Esophagus muscularis mucosa (tissue), 4 donors: ENCODE measurements at regions of chr12 and their contacts with region 1.

Region 1: GRCh38 chr12:91991399-91992187 is 154.1 kb downstream of the BTG1 start:
- DNase-seq: no peak
- H3K4me3 ChIP-seq: no peak overlapping the region
- H3K27ac ChIP-seq: no peak overlapping the region
- H3K4me1 ChIP-seq: peaks cover 0 to 11% (median 0%) of the 10 kb centered on the region in 4 donors
- H3K27me3 ChIP-seq: no peaks in the 10 kb centered on the region
- CTCF ChIP-seq: no peak
- EP300 ChIP-seq: no peak
- POLR2A ChIP-seq: no peak

Region 2: GRCh38 chr12:91617830-91618702 is 373.5 kb before region 1 on chr12:
- intact Hi-C with region 1: no loop called
- DNase-seq: no peak
- H3K4me3 ChIP-seq: no peak overlapping the region
- H3K27ac ChIP-seq: no peak overlapping the region
- H3K4me1 ChIP-seq: no peaks in the 10 kb centered on the region
- H3K27me3 ChIP-seq: no peaks in the 10 kb centered on the region
- CTCF ChIP-seq: no peak
- EP300 ChIP-seq: no peak
- POLR2A ChIP-seq: no peak

Region 3: DNA sequence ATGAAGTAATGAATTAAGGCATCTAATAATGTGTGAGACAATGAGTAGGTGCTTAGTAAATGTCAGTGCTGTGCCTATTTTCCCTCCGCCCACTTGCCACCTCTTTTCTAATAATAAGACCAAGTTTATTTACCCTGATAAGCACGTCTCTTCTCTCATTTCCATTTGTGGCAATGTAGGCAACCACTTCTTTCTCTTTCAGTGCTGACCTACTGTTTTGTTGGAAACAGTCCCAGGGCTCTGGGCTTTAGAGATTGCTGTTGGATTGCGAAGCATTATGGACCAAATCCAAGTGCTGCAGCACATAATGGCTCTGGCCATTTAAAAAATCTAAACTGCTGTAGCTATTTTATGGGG is 569.9 kb after region 1 on chr12:
- intact Hi-C with region 1: loop called (anchors 10 kb)
- DNase-seq: no peak
- H3K4me3 ChIP-seq: no peak overlapping the region
- H3K27ac ChIP-seq: peak overlapping the region; percentile 16 to 73 (median 58)
- H3K4me1 ChIP-seq: peaks cover 24 to 29% (median 28%) of the 10 kb centered on the region in 4 donors
- H3K27me3 ChIP-seq: no peaks in the 10 kb centered on the region
- CTCF ChIP-seq: no peak
- EP300 ChIP-seq: no peak
- POLR2A ChIP-seq: no peak